Posterior vena cava (tissue), 2 donors: ENCODE measurements at regions of chr16 and their contacts with region 1.

Region 1: DNA sequence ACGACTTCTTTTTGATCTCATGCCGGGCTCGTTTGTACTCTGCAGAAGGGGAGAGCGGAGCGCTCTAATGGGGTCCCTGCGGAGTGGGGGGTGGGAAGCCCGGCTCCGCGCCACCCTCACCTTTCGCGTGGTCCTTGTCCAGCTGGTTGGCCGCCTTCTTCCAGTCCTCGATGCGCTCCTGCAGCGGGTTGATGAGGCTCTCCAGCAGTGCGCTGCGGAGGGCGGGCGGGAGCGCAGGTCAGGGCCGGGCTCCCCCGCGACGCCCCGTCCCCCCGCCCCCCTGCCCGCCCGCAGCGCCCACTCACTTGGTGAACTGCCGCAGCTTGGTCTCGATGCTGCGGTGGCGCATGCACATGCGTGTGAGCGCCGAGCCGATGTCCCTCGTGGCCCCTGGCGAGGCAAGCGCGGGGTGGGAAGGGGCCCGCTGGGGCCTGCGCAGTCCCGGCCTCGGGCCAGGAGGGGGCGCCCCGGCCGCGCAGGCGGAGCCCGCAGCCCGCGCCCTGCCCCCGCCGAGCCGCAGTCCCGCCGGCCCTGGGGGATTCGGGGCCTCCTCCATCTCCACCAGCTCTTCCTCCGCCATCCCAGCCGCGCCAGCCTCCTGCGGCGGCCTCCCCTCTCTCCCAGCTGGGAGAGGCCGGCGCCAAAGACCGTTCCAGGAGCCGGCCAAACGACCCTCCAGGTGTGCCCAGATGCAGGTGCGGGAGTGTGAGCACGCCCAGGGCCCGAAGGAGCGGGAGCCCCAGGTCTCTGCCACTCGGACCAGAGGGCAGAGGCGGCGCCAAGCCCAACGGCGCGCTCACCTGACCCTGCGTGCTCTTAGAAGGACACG is 6.0 kb downstream of the MTSS2 start:
- DNase-seq: no peak

Region 2: DNA sequence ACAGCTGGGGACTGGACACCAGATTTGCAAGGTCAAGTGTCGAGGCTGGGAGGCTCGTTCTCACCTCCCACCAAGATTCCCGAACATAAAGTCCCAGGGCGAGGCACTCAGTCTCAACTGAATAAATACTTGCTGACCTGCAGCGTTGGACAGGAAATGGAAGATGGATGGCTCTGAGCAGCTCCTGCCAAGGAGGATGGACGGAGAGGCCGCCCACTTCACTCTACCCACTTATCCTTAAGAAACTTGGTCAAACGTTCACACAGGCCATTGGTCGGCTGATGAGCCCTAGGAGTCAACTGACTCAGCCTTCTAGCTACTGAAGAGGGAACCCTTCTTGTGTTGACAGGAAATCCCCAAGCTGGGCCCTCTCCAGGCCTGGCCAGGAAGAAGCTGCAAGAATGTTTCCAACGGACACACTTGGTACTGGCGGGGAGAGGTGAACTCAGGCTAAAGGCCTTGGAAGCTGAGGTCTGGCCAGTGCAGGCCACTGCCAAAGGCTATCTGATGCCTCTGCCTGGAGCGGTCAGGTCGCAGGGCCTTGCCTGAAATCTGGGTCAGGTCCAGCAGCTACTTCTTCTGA is 71.1 kb after region 1 on chr16:
- intact Hi-C with region 1: loop called in 1 of 2 experiments (anchors 5 kb)
- DNase-seq: peak; percentile 94

Region 3: DNA sequence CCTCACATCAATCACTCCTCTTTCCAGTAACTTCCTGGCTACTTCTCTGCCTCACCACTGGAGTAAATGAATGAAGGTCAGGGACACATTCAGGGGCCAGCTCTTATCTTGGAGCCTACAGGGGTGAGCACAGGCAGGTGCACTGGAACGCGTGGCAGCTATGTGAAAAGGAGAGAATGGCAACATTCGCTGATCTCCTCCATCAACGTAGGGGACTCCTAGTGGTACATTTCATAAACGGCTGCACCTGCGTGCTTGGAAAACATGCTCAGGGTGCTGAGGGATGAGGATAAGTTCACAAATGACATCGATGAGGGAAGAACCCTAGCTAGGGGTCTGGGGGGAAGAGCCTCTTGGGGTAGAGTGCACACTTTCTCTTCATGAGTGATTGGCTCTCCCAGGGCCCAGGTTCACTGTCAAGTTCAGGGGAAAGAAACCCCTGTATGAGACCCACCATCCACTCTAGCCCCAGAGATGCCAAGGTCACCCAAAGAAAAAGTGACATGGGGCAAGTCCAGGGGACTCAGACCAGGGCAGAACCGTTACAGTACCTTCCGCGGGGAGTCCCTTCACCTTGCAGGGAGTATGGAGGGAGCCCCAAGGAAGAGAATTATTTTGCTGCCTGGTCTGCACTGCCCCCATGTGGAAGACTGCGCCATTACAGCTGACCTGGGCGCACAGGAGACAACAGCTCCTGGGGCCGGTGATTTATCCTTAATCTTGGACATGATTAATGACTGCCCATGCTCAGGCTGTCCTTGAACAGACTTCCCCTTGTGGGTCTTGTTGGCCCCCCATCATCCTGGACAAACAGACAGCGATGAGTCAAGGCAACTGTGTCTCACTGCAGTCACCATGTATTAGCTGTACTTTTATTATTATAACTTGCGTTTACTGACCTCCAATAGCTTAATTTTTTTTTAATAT is 91.0 kb after region 1 on chr16:
- intact Hi-C with region 1: loop called (anchors 5 kb)
- DNase-seq: no peak